ENCODE measurements at regions of chr22 and their contacts with region 1.

Region 1: GRCh38 chr22:35350539-35351503 is 30.1 kb upstream of the HMOX1 start:
- DNase-seq: peak; percentile 96
- H3K4me3 Mint-ChIP-seq: peak overlapping the region; percentile 89
- H3K27ac Mint-ChIP-seq: peak overlapping the region; percentile 76
- H3K4me1 Mint-ChIP-seq: peaks cover 27% of the 10 kb centered on the region
- H3K27me3 Mint-ChIP-seq: peaks cover 4% of the 10 kb centered on the region

Region 2: DNA sequence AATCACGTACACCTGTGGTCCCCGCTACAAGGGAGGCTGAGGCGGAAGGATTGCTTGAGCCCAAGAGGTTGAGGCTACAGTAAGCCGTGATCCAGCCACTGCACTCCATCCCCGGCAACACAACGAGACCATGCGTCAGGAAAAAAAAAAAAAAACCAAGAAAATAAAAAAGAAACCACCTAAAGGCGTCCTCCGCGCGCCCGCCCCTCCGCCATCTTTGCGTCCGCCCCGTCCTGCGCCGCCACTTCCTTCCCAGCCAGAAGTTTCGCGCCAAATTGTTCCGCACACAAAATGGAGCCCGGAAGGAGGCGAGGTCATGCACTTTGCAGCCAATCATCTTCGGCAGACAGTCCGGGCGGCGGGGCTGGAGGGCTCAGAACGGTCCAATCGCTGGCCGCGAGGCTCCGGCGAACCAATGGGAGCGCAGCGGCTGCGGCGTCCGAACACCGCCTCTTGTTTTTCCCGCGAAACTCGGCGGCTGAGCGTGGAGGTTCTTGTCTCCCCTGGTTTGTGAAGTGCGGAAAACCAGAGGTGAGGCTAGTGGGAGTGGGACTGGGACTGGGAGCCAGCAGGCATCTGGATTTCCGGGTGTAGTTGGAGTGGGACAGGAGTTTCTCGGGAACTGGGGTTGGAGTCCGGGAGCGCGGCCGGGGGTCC is 49.0 kb after region 1 on chr22 and contains the start of gene MCM5:
- intact Hi-C with region 1: loop called (anchors 2 kb)
- DNase-seq: peak; percentile 99
- H3K4me3 Mint-ChIP-seq: peak within 1 kb of the TSS; percentile 100
- H3K27ac Mint-ChIP-seq: peak within 1 kb of the TSS; percentile 99
- H3K4me1 Mint-ChIP-seq: peaks cover 26% of the 10 kb centered on the region
- H3K27me3 Mint-ChIP-seq: no peaks in the 10 kb centered on the region
- total RNA-seq, gene MCM5: 334 and 343 TPM in 2 replicates

Region 3: DNA sequence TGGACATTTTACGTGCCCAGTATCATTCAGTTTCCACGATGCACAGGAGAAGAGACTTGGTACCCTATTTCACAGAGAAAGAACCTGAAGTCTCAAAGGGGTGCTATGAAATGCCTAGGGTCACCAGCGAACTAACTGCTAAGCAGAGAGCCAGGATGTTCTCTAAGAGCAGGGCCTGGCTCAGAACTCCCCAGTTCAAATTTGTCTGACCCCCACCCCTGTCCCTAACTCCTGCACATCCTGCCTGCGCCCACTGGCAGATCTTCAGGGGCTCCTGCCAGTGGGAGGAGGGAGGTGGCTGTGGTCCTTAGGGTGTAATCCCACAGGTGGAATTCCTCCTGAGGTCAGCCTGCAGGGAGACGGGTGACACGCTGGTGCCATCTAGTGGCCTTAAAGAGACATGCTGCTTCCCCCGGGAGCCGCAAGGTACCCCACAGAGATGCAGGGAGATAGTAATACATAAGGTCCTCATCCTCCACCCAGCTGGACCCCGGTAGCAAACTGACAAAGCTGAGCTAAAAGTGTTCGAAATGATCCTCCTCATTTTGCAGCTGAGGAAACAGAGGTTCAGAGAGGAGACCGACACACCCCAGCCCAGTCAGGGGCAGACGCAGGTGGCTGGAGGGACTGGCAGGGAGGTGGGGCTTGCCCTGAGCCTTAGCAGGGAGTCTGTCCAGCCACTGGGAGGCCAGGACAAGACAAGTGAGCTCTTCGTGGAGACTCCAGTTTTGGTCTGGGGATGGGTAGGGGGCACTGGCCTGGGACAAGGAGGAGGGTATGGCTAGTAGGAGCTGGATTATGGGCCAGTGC is 232.2 kb after region 1 on chr22:
- intact Hi-C with region 1: loop called (anchors 1 kb)
- DNase-seq: peak; percentile 84
- H3K4me3 Mint-ChIP-seq: no peak overlapping the region
- H3K27ac Mint-ChIP-seq: no peak overlapping the region
- H3K4me1 Mint-ChIP-seq: peaks cover 3% of the 10 kb centered on the region
- H3K27me3 Mint-ChIP-seq: peaks cover 3% of the 10 kb centered on the region

Region 4: DNA sequence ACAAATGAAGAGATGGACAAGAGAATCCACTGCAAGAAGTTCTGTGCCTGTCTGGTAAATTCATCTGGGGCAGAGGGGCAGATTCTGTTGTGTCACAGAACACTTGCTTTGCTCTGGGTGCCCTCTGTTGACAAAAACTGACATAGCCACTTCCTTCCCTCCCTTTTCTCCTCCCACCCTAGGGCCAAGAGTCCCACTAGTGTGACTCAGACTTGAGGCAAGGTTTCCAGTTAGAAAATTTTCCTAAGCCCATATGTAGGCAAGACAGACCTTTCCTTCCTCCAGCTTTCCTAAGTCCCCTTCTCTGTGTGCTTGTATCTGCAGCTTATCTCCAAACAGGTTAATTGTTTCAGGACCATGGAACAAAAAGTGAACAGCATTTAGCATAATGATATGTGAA is 571.0 kb after region 1 on chr22:
- intact Hi-C with region 1: loop called (anchors 5 kb)
- DNase-seq: peak; percentile 81
- H3K4me3 Mint-ChIP-seq: no peak overlapping the region
- H3K27ac Mint-ChIP-seq: no peak overlapping the region
- H3K4me1 Mint-ChIP-seq: peaks cover 5% of the 10 kb centered on the region
- H3K27me3 Mint-ChIP-seq: no peaks in the 10 kb centered on the region

Region 5: DNA sequence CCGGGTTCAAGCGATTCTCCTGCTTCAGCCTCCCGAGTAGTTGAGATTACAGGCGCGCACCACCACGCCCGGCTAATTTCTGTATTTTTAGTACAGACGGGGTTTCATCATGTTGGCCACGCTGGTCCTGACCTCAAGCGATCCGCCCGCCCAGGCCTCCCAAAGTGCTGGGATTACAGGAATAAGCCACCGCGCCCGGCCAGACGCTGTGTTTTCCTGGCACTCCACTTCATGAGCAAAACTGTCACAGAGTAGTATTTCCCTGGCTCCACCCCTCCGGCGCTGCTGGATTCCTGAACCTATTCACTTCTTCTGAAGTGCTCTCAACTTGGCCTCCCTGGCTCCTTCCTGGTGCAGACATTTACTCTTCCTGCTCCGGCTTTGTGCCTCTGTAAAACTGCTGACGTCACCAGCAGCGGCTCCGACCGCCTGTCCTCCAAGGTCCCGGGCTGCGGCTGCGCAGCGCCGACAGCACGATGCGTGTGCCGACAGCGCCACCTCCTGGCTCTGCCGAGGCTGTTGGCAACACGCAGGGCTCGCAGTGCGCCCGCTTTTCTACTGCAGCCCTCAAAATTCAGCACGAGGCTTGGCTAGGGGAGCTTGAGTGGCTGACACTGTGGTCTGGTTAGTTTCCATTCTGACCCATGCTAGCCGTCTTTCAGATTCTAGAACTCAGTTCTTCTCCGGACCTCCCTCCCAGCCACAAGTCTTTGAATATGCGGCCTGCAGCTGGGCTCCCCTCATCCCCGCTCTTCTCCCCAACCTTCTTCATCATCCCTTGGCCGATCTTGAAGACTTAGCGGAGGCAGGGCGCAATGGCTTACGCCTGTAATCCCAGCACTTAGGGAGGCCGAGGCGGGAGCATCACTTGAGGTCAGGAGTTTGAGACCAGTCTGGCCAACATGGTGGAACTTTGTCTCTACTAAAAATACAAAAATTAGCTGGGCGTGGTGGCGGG is 773.1 kb after region 1 on chr22:
- intact Hi-C with region 1: loop called (anchors 1 kb)
- DNase-seq: peak; percentile 98
- H3K4me3 Mint-ChIP-seq: peak overlapping the region; percentile 71
- H3K27ac Mint-ChIP-seq: peak overlapping the region; percentile 82
- H3K4me1 Mint-ChIP-seq: peaks cover 8% of the 10 kb centered on the region
- H3K27me3 Mint-ChIP-seq: peaks cover 8% of the 10 kb centered on the region

Measured in activated CD4-positive, alpha-beta T cell treated with anti-CD3 and anti-CD28 coated beads, Interleukin-2, amount 10 ng/mL, durations not matched to agents 24 days and 14 days (primary cell).